T-cell (primary cell): ENCODE measurements at regions of chr15 and their contacts with region 1.

Region 1: GRCh38 chr15:59247364-59247763 is 40.7 kb downstream of the LDHAL6B start:
- DNase-seq: peak in 33 of 35 experiments; percentile 5 to 71 (median 37)
- ATAC-seq: peak in 3 of 4 experiments; percentile 55 to 65 (median 61)
- H3K4me3 ChIP-seq: no peak overlapping the region
- H3K4me3 Mint-ChIP-seq: no peak overlapping the region
- H3K27ac ChIP-seq: no peak overlapping the region
- H3K27ac Mint-ChIP-seq: no peak overlapping the region
- H3K4me1 ChIP-seq: no peaks in the 10 kb centered on the region
- H3K4me1 Mint-ChIP-seq: peaks cover 0 to 6% (median 2%) of the 10 kb centered on the region in 3 donors
- H3K27me3 ChIP-seq: peaks cover 0 to 2% of the 10 kb centered on the region in 2 experiments
- H3K27me3 Mint-ChIP-seq: no peaks in the 10 kb centered on the region

Region 2: DNA sequence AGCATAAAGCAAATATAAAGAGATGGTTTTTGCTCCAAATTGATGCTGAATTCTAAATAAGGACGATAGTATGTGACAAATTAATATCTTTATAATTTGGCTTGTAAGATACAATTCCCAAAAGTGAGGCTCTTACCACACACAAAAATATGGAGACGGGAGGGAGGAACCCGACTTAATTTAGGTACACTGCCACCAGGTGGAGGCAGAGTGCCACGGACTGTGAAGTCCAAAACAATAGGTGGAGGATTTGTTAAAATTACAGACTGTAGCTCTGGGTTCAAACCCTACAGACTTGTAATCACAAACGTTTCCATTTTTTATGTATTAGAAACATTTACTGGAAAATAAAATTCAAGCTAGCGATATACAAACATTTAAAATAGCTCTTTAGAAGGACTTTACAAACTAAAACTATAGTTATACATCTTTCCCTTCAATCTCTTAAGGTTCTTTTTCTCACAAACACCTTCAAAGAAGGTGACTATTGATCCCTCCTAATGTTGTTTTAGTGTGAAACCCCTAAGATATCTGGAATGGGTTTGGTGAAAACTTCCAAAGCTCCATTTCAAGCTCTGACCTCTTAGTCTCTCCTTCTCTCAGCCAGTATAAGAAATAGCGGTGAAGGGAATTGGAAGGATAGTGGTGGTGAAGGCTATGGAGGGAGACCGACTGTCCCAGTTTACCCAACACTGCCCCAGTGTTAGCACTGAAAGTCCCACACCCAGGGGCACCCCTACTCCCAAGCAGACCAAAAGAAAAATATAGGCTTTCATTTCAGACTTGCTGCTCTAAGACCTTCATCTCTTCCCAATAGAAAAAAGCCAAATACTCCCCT is 1019.4 kb before region 1 on chr15:
- CTCF ChIA-PET with region 1: no interaction called
- POLR2A ChIA-PET with region 1: interaction called in 1 of 2 experiments, 10 read pairs
- DNase-seq: peak in 34 of 35 experiments; percentile 28 to 80 (median 56)
- ATAC-seq: peak in 2 of 4 experiments; percentile 45 to 46
- H3K4me3 ChIP-seq: no peak overlapping the region
- H3K4me3 Mint-ChIP-seq: no peak overlapping the region
- H3K27ac ChIP-seq: no peak overlapping the region
- H3K27ac Mint-ChIP-seq: no peak overlapping the region
- H3K4me1 ChIP-seq: peaks cover 3 to 13% of the 10 kb centered on the region in 2 experiments
- H3K4me1 Mint-ChIP-seq: peaks cover 12 to 19% (median 15%) of the 10 kb centered on the region in 3 donors
- H3K27me3 ChIP-seq: peaks cover 0 to 11% of the 10 kb centered on the region in 2 experiments
- H3K27me3 Mint-ChIP-seq: peaks cover 0 to 7% of the 10 kb centered on the region in 2 donors